GM13977 (cell line): ENCODE measurements at regions of chr20 and their contacts with region 1.

Region 1: GRCh38 chr20:57501461-57502335 is 23.2 kb downstream of the CTCFL start:
- DNase-seq: no peak
- CTCF ChIP-seq: no peak

Region 2: DNA sequence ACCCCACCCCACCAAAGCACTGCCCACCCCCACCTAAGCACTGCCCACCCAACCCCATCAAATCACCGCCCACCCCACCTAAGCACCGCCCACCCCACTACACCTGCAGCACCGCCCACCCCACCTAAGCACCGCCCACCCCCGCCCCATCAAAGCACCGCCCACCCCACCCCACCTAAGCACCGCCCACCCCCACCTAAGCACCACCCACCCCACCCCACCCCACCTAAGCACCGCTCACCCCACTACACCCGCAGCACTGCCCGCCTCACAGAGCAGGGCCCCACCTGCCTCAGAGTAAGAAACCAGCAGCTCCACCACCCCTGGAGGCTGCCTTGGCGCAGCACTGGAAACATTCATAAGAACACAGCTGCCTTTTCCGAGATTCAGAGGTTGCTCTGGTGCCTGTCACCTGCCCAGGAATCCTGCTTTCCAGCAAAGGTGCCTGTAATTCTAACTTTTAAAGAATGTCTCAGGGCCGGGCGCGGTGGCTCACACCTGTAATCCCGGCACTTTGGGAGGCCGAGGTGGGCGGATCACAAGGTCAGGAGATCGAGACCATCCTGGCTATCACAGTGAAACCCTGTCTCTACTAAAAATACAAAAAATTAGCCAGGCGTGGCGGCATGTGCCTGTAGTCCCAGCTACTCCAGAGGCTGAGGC is 383.5 kb before region 1 on chr20:
- in situ Hi-C with region 1: no loop called
- DNase-seq: no peak
- CTCF ChIP-seq: no peak

Region 3: DNA sequence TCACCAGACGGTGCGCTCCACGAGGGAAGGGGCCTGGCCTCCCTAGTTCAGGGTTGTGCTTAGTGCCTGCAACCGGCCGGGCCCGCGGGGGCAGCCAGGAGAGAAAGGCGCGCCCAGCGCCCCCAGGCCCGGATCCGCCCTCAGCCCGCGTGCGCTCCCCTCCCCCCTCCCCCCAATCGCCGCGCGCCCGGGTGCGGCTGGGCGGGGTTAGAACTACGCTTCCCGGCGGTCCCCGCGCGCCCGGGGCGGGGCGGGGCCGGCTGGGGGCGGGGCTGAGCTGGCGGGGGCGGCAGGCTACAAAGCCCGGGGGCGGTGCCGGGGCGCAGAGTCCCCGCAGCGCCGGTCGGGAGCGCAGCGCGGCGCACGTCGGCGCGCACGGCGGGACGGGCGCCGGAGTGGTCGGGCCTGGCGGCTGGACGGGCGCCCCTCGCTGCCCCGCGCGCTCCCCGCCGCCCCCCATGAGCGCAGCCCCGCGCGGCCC is 110.6 kb before region 1 on chr20 and contains the start of gene RBM38:
- in situ Hi-C with region 1: loop called (anchors 5 kb)
- DNase-seq: peak; percentile 98
- CTCF ChIP-seq: no peak

Region 4: GRCh38 chr20:57928181-57928580 is 426.5 kb after region 1 on chr20:
- in situ Hi-C with region 1: no loop called
- DNase-seq: no peak
- CTCF ChIP-seq: no peak